ENCODE measurements at regions of chr2 and their contacts with region 1.

Region 1: GRCh38 chr2:169928463-169928864 is 101.2 kb downstream of the UBR3 start:
- DNase-seq: no peak
- H3K4me3 ChIP-seq: no peak overlapping the region
- H3K27ac ChIP-seq: no peak overlapping the region
- H3K4me1 ChIP-seq: no peaks in the 10 kb centered on the region
- H3K27me3 ChIP-seq: no peaks in the 10 kb centered on the region
- CTCF ChIP-seq: peak; percentile 76

Region 2: DNA sequence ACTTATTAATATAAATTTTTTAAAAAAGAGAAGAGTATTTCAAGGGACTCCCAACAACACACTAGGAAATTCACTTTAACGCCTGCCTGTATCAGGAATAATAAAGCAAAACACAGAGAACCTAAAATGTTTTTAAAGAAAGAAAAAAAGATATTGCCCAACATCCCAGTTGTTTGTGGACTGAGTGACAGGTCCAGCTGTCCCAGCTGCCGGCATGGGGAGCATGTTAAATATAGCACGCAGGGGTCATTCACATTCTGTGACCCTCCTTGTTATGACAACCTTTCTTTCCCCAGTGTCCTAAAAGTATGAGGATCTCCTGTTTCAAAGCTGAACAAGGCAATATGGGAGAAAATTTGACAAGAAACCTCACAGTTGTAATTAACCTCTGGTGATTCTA is 414.5 kb before region 1 on chr2:
- intact Hi-C with region 1: loop called (anchors 10 kb)
- DNase-seq: no peak
- H3K4me3 ChIP-seq: peak overlapping the region; percentile 61
- H3K27ac ChIP-seq: peak overlapping the region; percentile 67
- H3K4me1 ChIP-seq: peaks cover 29% of the 10 kb centered on the region
- H3K27me3 ChIP-seq: no peaks in the 10 kb centered on the region
- CTCF ChIP-seq: no peak

Region 3: DNA sequence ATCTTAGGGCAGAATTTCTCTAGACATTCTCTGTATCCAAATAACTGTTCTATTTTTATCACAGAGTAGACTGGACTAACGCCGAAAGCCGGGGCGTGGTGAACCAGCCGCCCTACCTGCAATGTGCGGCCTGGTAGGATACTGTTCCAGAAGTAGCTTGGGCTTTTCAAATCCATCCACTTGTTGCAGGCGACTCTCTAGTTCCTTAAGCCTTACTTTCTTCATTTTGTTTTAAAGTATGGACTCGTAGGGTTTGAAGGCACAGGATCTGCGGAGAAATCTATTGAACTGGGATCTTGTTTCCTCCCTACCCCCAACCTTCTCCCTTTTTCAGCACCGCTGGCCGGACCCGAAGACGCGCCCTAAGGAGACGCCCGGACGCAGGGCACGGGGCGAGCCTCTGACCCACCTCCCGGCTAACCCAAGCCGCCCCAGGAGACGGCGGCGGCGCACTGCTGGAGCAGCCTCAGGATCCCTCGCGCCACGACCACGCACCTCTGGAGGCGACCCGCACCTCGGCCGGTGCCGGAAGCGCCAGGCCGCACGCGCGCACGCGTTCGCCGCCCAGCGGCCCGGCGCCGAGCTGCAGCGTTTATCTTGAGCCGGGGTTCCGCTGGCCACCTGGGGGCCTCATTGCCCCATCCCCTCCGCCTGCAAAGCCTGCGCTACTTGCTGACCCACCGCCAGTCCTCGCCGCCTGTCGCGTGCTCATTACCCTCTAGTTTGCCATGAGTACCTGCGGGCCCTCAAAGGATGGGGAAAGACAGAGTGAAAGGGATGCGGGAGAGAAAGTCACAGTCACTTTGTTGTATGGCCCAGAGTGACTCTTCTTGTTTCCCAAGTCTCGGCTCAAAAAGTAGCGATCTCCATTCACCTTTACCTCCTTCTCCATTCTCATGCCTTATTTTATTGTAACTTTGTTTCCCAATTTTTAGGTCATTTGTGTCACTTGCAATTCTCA is 103.8 kb before region 1 on chr2 and contains the start of gene METTL5:
- intact Hi-C with region 1: loop called (anchors 5 kb)
- DNase-seq: peak; percentile 83
- H3K4me3 ChIP-seq: peak within 1 kb of the TSS; percentile 82
- H3K27ac ChIP-seq: peak within 1 kb of the TSS; percentile 87
- H3K4me1 ChIP-seq: peaks cover 66% of the 10 kb centered on the region
- H3K27me3 ChIP-seq: no peaks in the 10 kb centered on the region
- CTCF ChIP-seq: peak; percentile 99
- total RNA-seq, gene METTL5: 60.4 TPM

Region 4: GRCh38 chr2:170038734-170039133 is 110.3 kb after region 1 on chr2:
- intact Hi-C with region 1: no loop called
- DNase-seq: no peak
- H3K4me3 ChIP-seq: no peak overlapping the region
- H3K27ac ChIP-seq: no peak overlapping the region
- H3K4me1 ChIP-seq: no peaks in the 10 kb centered on the region
- H3K27me3 ChIP-seq: no peaks in the 10 kb centered on the region
- CTCF ChIP-seq: no peak

Region 5: GRCh38 chr2:171244970-171245782 is 1316.7 kb after region 1 on chr2:
- intact Hi-C with region 1: no loop called
- DNase-seq: no peak
- H3K4me3 ChIP-seq: no peak overlapping the region
- H3K27ac ChIP-seq: no peak overlapping the region
- H3K4me1 ChIP-seq: no peaks in the 10 kb centered on the region
- H3K27me3 ChIP-seq: no peaks in the 10 kb centered on the region
- CTCF ChIP-seq: no peak

Measured in left ventricle myocardium inferior (tissue), 1 donor.